ENCODE measurements at regions of chr12 and their contacts with region 1.

Region 1: DNA sequence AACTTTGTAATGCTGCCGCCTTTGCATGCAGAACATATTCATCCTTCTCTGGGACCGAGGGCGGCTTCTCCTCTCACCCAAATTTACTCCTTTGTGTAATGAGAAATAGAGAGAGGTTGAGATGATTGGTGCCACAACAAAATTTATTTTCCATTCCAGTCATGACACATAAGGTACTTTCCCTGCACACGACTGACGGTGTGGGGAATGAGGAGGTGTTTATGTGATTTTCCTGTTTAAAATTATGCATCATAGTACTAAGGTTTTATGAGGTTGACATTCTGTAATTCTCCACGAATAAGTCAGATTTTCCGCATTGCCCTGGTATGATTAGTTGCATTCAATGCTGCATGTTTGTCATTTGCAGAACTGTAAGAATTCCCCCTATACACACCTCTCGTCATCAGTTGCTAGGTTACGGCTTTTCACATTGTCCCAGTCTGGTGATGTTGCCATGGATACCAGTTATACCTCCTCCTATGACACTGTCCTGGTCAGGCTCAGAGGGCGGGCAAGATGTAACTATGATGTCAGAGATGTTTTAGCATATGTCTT is 23.1 kb downstream of the BICDL1 start:
- DNase-seq: peak; percentile 66 to 92 (median 79)
- H3K4me3 ChIP-seq: peak overlapping the region; percentile 10
- H3K4me3 Mint-ChIP-seq: peak overlapping the region; percentile 67 to 86 (median 83)
- H3K27ac ChIP-seq: peak overlapping the region; percentile 84
- H3K27ac Mint-ChIP-seq: peak overlapping the region; percentile 94 to 100 (median 99)
- H3K4me1 ChIP-seq: peaks cover 78% of the 10 kb centered on the region
- H3K4me1 Mint-ChIP-seq: peaks cover 79 to 94% (median 92%) of the 10 kb centered on the region in 3 donors
- H3K27me3 ChIP-seq: no peaks in the 10 kb centered on the region
- H3K27me3 Mint-ChIP-seq: no peaks in the 10 kb centered on the region

Region 2: GRCh38 chr12:119704065-119704747 is 307.9 kb before region 1 on chr12:
- CTCF ChIA-PET with region 1: no interaction called
- POLR2A ChIA-PET with region 1: no interaction called
- DNase-seq: no peak
- H3K4me3 ChIP-seq: no peak overlapping the region
- H3K4me3 Mint-ChIP-seq: no peak overlapping the region
- H3K27ac ChIP-seq: no peak overlapping the region
- H3K27ac Mint-ChIP-seq: no peak overlapping the region
- H3K4me1 ChIP-seq: no peaks in the 10 kb centered on the region
- H3K4me1 Mint-ChIP-seq: no peaks in the 10 kb centered on the region
- H3K27me3 ChIP-seq: no peaks in the 10 kb centered on the region
- H3K27me3 Mint-ChIP-seq: no peaks in the 10 kb centered on the region

Region 3: GRCh38 chr12:119988782-119989668 is 23.1 kb before region 1 on chr12 and contains the start of gene BICDL1:
- CTCF ChIA-PET with region 1: interaction called, 12 read pairs
- POLR2A ChIA-PET with region 1: interaction called, 53 read pairs
- DNase-seq: peak; percentile 94 to 99 (median 99)
- H3K4me3 ChIP-seq: peak within 1 kb of the TSS; percentile 67
- H3K4me3 Mint-ChIP-seq: peak within 1 kb of the TSS; percentile 85 to 95 (median 87)
- H3K27ac ChIP-seq: peak within 1 kb of the TSS; percentile 75
- H3K27ac Mint-ChIP-seq: peak within 1 kb of the TSS; percentile 78 to 99 (median 97)
- H3K4me1 ChIP-seq: peaks cover 24% of the 10 kb centered on the region
- H3K4me1 Mint-ChIP-seq: peaks cover 34 to 44% (median 43%) of the 10 kb centered on the region in 3 donors
- H3K27me3 ChIP-seq: no peaks in the 10 kb centered on the region
- H3K27me3 Mint-ChIP-seq: no peaks in the 10 kb centered on the region
- total RNA-seq, gene BICDL1: 106 to 109 TPM

Region 4: GRCh38 chr12:120086801-120087621 is 74.9 kb after region 1 on chr12:
- CTCF ChIA-PET with region 1: interaction called, 14 read pairs
- POLR2A ChIA-PET with region 1: interaction called, 8 read pairs
- DNase-seq: peak; percentile 99 to 100 (median 100)
- H3K4me3 ChIP-seq: peak overlapping the region; percentile 37
- H3K4me3 Mint-ChIP-seq: peak overlapping the region; percentile 65 to 91 (median 81)
- H3K27ac ChIP-seq: peak overlapping the region; percentile 29
- H3K27ac Mint-ChIP-seq: peak overlapping the region; percentile 86 to 96 (median 94)
- H3K4me1 ChIP-seq: peaks cover 14% of the 10 kb centered on the region
- H3K4me1 Mint-ChIP-seq: peaks cover 15 to 32% (median 29%) of the 10 kb centered on the region in 3 donors
- H3K27me3 ChIP-seq: no peaks in the 10 kb centered on the region
- H3K27me3 Mint-ChIP-seq: peaks cover 0 to 2% of the 10 kb centered on the region in 2 donors

Region 5: DNA sequence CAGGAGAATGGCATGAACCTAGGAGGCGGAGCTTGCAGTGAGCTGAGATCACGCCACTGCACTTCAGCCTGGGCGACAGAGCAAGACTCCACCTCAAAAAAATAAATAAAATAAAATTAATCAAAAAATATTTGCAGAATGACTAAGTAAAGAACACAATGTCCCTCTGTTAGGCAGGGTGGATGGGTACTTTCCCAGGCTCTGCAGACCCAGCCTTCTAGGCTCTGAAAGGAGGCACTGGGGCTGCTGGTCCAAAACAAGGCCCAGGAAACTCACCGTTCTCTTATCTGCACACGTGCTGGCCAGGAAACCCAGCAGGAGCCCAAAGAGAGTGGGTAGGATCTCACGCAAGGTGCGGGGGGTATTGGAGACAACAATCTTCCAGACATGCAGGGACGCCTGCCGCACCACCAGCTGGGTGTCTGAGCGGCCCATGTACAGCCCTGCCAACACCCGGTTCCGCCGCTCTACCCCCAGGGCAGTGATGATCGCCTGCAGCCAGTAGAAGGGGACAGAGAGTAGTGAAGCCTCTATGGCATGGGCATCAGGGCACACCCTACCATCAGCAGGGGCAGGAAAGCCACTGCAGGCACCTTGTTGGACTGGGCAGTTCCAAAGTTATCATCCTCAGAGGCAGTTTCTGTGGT is 130.2 kb after region 1 on chr12:
- CTCF ChIA-PET with region 1: no interaction called
- POLR2A ChIA-PET with region 1: no interaction called
- DNase-seq: no peak
- H3K4me3 ChIP-seq: no peak overlapping the region
- H3K4me3 Mint-ChIP-seq: peak overlapping the region in 1 of 7 donors; percentile 23
- H3K27ac ChIP-seq: no peak overlapping the region
- H3K27ac Mint-ChIP-seq: no peak overlapping the region
- H3K4me1 ChIP-seq: no peaks in the 10 kb centered on the region
- H3K4me1 Mint-ChIP-seq: no peaks in the 10 kb centered on the region
- H3K27me3 ChIP-seq: no peaks in the 10 kb centered on the region
- H3K27me3 Mint-ChIP-seq: no peaks in the 10 kb centered on the region